AG04449 (cell line): ENCODE measurements at regions of chr7 and their contacts with region 1.

Region 1: DNA sequence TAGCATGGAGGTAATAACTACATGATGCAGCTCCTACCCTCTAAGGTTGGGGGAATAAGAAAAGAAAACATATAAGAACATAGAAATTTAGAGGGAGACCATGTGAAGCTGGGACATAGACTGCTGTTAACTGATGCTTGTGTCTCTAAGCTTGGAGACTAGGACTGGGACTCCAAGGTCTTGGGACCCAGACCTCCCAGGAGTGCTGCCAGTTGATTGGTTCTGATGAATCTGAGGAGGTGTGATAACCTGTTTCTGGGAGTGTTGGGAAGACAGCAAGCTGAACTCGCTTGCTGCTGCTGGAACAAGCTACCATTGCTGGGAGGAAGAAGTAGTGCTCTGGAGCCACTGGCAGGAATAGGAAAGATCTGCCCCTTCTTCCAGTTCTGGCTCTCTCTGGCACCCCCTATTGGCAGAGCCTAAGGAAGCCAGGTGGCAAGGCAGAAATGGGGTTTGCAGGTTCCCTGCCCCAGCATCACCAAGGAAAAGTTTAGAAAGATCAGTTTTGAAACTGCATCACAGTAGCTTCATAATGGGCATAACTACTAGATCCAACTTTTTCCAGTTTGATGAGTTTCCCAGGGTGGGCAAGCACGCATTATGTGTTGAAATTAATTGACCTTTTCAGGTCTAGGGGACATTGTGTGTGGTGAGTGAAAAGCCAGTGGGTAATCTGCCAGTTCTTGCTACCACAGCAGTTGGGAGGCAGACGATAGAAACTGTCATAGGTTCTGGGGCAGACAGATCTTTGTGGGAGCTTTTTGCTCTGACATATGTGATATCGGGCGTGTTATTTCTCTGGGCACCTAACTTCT is 140.7 kb downstream of the SND1 start:
- DNase-seq: no peak
- H3K4me3 ChIP-seq: no peak overlapping the region
- CTCF ChIP-seq: peak; percentile 37

Region 2: GRCh38 chr7:126700807-126701604 is 1091.7 kb before region 1 on chr7:
- CTCF ChIA-PET with region 1: no interaction called
- POLR2A ChIA-PET with region 1: no interaction called
- DNase-seq: peak; percentile 85
- H3K4me3 ChIP-seq: no peak overlapping the region; the same call in 1 of the 2 replicates
- CTCF ChIP-seq: no peak

Region 3: GRCh38 chr7:127525866-127526480 is 266.8 kb before region 1 on chr7:
- CTCF ChIA-PET with region 1: no interaction called
- POLR2A ChIA-PET with region 1: no interaction called
- DNase-seq: no peak
- H3K4me3 ChIP-seq: no peak overlapping the region
- CTCF ChIP-seq: no peak

Region 4: DNA sequence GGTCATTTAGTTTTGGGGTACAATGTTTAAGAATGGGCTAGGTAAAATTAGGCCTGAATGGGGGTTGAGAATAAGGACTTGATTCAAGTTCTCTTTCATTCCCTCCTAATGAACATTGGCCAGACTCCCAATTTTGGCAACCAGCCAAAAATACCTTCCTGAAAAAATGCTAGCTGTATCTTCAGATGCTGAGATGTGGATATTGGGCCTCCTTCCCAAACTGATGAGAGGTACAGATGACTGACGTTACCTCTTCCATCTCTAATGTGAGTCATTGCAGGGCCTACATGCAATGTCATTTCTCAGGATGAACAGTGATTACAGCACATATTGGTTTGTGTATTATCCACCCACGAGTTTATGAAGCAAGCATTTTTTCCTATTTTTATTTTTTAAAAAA is 10.9 kb after region 1 on chr7:
- CTCF ChIA-PET with region 1: interaction called, 13 read pairs
- POLR2A ChIA-PET with region 1: no interaction called
- DNase-seq: no peak
- H3K4me3 ChIP-seq: no peak overlapping the region
- CTCF ChIP-seq: no peak

Region 5: DNA sequence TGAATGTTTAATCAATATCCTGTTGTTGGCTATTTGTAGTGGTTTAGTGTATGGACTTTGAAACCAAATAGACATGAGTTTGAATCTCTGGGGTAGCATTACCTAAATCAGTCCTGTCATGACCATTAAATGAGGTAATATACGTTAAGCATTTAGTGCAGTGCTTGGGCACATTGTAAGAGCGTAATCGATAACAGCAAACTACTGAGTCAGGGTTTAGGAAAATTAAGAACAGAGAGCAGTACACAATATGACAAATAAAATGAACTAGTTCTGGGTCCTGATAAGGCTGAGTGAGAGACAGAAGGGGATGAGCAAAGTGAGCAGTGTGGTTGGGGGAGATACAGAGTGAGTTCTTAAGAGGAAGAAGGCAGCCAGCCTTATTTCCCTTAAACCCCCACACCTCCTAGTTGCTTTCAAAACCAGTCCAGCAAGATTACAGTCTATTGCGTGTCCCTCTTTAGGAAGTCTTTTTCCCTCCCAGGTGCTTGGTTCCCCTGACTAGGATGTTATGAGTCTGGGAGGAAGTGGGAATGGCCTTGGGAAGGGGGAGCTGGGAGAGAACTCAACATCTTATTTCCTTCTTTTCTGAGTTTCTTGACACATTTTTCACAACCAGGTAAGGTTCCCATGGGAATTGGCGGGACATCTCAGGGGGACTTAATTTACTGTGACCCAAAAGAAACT is 30.2 kb after region 1 on chr7:
- CTCF ChIA-PET with region 1: no interaction called
- POLR2A ChIA-PET with region 1: no interaction called
- DNase-seq: no peak
- H3K4me3 ChIP-seq: no peak overlapping the region
- CTCF ChIP-seq: no peak

Region 6: DNA sequence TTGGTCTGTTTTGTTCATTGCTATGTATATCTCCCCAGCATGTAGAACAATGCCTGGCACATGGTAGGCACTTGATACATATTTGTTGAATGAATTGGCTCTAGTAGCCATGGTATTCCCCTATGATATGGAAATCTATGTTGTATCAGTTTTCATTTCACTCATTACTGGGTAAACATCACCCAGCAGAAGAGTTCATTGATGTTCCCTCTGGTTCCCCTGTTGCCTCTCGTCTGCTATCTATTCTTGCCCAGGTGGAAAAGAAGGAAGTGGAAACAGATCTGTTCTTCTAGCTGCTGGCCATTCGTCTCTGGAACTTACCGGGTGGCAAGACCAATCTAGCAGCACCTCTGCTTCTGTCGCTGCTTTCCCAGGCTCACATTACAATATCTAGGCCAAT is 167.0 kb after region 1 on chr7:
- CTCF ChIA-PET with region 1: no interaction called
- POLR2A ChIA-PET with region 1: no interaction called
- DNase-seq: no peak
- H3K4me3 ChIP-seq: no peak overlapping the region
- CTCF ChIP-seq: no peak